SK-N-SH (cell line): ENCODE measurements at regions of chr7 and their contacts with region 1.

Region 1: DNA sequence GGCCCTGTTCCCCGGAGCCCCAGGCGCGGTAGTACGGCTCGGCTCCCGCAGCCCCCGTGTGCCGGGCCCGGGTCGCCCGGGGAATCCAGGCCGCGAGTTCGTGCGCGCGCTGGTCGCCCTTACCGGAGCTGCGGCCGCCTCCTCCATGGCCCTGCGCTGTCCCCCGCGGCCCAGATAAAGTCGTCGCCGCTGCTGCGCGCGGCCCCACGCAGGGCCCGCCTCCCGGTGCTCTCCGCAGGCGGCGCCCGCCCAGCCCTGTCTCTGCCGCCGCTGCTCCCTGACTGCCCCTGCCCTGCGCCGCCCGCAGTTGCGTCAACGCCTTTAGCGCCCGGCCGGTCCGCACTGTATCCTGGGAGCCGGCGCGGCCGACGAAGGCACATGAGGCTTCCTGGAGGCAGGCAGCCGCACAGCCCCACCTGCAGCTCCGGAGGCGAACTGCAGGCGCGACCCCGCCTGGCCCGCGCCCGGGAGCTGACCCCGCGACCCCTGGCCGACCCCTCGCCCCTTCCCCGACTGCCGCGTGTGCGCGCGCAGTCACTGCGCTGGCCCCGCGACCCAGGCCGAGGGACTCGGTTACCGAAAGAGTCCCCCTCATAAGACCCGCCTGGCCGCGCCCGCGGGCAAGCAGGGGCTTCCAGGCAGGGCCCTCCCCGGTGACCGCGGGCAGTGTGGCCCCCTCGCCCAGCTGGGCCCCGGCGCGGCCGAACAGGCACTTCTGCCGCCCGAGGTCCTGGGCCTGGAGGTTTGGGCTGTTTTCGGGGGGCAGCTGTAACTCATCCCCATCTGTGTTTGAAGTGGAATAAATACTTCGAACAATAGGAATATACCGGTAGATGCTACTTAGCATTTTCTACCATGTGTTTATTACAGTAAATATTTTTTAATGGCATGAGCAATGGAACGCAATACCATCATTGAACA is 127.1 kb upstream of the ZNF746 start:
- DNase-seq: peak; percentile 99
- H3K4me3 ChIP-seq: peak overlapping the region; percentile 89 to 95
- H3K27ac ChIP-seq: peak overlapping the region; percentile 43 to 79
- H3K4me1 ChIP-seq: peaks cover 7 to 16% of the 10 kb centered on the region in 2 experiments; a peak in 2 of 4 replicates
- H3K27me3 ChIP-seq: peaks cover 4% of the 10 kb centered on the region; the same call in 1 of the 2 replicates
- CTCF ChIP-seq: peak; percentile 94
- EP300 ChIP-seq: peak in 1 of 2 experiments; percentile 62; a peak in 1 of 4 replicates
- RAD21 ChIP-seq: no peak

Region 2: GRCh38 chr7:149608168-149608567 is 16.5 kb before region 1 on chr7:
- CTCF ChIA-PET with region 1: interaction called, 12 read pairs
- POLR2A ChIA-PET with region 1: no interaction called
- DNase-seq: no peak
- H3K4me3 ChIP-seq: no peak overlapping the region
- H3K27ac ChIP-seq: no peak overlapping the region
- H3K4me1 ChIP-seq: no peaks in the 10 kb centered on the region
- H3K27me3 ChIP-seq: no peaks in the 10 kb centered on the region
- CTCF ChIP-seq: no peak
- EP300 ChIP-seq: no peak
- RAD21 ChIP-seq: no peak

Region 3: GRCh38 chr7:149637911-149638565 is 13.4 kb after region 1 on chr7:
- CTCF ChIA-PET with region 1: interaction called, 13 read pairs
- POLR2A ChIA-PET with region 1: no interaction called
- DNase-seq: no peak
- H3K4me3 ChIP-seq: no peak overlapping the region
- H3K27ac ChIP-seq: no peak overlapping the region
- H3K4me1 ChIP-seq: no peaks in the 10 kb centered on the region
- H3K27me3 ChIP-seq: peaks cover 49% of the 10 kb centered on the region
- CTCF ChIP-seq: no peak
- EP300 ChIP-seq: no peak
- RAD21 ChIP-seq: no peak

Region 4: DNA sequence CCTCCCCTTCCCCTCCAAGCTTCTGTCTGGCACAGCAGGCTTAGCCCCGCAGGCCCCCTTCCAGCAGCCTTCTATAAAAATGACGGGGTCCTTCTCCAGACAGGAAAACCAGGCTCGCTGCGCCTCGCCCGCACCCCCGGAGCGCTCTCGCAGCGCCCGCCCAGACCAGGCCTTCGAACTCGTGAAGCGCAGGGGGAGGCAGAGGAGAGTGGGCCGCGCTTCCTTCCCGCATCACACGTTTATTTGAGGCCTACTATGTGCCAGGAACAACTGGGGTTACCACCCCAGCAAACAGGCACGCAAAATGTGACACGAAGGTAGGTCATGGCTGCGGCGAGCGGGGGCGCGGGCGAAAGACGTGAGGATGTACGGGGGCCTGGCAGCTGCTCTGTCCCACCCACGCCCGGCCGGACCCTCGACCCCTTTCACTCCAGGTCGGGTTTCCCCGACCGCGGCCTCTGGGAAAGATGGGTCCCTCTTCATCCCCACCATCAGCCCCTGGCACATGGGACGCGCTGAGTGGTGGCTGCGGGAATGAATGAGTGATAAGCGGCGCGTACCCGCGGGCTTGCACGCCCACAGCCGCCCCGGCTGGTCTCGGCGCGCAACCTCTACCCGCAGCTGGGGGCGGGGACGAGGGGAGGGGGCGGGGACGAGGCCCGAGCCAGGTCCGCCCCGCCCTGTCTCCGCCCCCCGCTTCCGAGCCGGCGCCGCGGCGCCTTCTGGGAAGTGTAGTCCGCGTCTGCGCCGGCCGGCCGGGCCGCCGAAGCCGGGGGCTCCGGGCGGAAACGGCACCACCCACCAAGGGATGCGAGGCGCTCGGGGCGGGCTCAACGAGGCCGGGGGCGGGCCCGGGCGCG is 89.6 kb after region 1 on chr7:
- CTCF ChIA-PET with region 1: interaction called, 15 read pairs
- POLR2A ChIA-PET with region 1: no interaction called
- DNase-seq: peak; percentile 100
- H3K4me3 ChIP-seq: peak overlapping the region; percentile 60 to 63
- H3K27ac ChIP-seq: peak overlapping the region in 1 of 2 experiments; percentile 47; a peak in 1 of 4 replicates
- H3K4me1 ChIP-seq: peaks cover 5 to 28% of the 10 kb centered on the region in 2 experiments; a peak in 1 of 4 replicates
- H3K27me3 ChIP-seq: no peaks in the 10 kb centered on the region
- CTCF ChIP-seq: no peak
- EP300 ChIP-seq: no peak
- RAD21 ChIP-seq: no peak